Activated CD4-positive, alpha-beta memory T cell treated with anti-CD3 and anti-CD28 coated beads, Interleukin-2, amount 10 ng/mL, durations not matched to agents 7 days and 5 days (primary cell): ENCODE measurements at regions of chr14 and their contacts with region 1.

Region 1: GRCh38 chr14:53306267-53306721 is 153.2 kb upstream of the DDHD1 start:
- DNase-seq: peak; percentile 36
- H3K4me3 Mint-ChIP-seq: peak overlapping the region; percentile 31
- H3K27ac Mint-ChIP-seq: no peak overlapping the region
- H3K4me1 Mint-ChIP-seq: peaks cover 14% of the 10 kb centered on the region
- H3K27me3 Mint-ChIP-seq: peaks cover 4% of the 10 kb centered on the region

Region 2: DNA sequence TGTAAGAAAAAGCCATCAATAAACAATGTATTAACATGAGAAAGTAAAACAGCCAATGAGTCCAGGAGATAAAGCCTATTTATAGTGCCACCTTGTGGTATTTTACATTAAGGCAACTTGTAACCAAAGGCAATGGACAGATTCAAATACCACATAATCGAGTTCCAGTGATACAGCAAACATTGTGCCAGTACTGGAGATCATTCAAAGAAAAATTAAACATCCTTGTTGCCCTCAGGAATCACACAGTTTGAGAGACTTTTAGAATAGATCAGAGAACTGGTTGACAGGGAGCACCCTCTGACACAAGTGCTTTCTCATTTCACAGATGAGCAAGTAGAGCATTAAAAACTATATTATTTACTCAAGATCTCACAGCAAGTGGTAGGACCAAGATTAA is 251.3 kb before region 1 on chr14:
- CTCF ChIA-PET with region 1: interaction called, 14 read pairs
- POLR2A ChIA-PET with region 1: no interaction called
- DNase-seq: no peak
- H3K4me3 Mint-ChIP-seq: no peak overlapping the region
- H3K27ac Mint-ChIP-seq: no peak overlapping the region
- H3K4me1 Mint-ChIP-seq: peaks cover 1% of the 10 kb centered on the region
- H3K27me3 Mint-ChIP-seq: no peaks in the 10 kb centered on the region

Region 3: DNA sequence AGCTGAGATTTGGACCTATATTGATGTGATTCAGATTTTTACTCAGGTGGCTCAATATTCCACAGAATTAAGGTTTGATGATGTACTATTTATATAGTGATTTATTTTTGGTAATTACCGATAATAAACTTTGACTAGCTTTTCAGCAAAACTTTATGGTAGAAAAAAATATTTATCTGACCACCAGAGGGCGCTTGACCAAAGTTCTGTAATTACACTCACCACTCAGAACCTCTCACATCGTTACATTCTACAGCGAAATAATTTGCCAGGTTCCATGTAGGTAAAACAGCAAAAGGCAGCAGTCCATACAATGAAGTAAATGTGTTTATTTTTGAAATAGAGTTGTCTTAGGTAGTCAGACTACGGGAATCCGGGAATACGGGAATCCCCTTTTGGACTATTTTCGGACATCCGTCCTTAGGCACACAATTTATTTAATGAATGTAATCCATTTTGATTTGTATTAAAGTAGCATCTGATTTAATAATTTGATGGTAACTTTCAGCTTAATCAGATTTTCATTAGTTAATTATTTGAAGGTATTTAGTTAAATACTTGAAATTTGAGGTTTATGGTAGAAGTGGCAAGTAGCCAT is 10.2 kb before region 1 on chr14:
- CTCF ChIA-PET with region 1: interaction called, 16 read pairs
- POLR2A ChIA-PET with region 1: no interaction called
- DNase-seq: no peak
- H3K4me3 Mint-ChIP-seq: no peak overlapping the region
- H3K27ac Mint-ChIP-seq: no peak overlapping the region
- H3K4me1 Mint-ChIP-seq: no peaks in the 10 kb centered on the region
- H3K27me3 Mint-ChIP-seq: no peaks in the 10 kb centered on the region

Region 4: GRCh38 chr14:53630336-53630735 is 324.0 kb after region 1 on chr14:
- CTCF ChIA-PET with region 1: no interaction called
- POLR2A ChIA-PET with region 1: no interaction called
- DNase-seq: no peak
- H3K4me3 Mint-ChIP-seq: no peak overlapping the region
- H3K27ac Mint-ChIP-seq: no peak overlapping the region
- H3K4me1 Mint-ChIP-seq: no peaks in the 10 kb centered on the region
- H3K27me3 Mint-ChIP-seq: no peaks in the 10 kb centered on the region